PC-9 (cell line): ENCODE measurements at regions of chr16 and their contacts with region 1.

Region 1: GRCh38 chr16:78932355-78932943 is 668.1 kb downstream of the MAF start:
- DNase-seq: no peak
- H3K4me3 ChIP-seq: no peak overlapping the region
- H3K27ac ChIP-seq: no peak overlapping the region
- H3K4me1 ChIP-seq: no peaks in the 10 kb centered on the region
- H3K27me3 ChIP-seq: no peaks in the 10 kb centered on the region
- CTCF ChIP-seq: no peak

Region 2: GRCh38 chr16:79037521-79038373 is 105.3 kb after region 1 on chr16:
- CTCF ChIA-PET with region 1: interaction called, 4 read pairs
- POLR2A ChIA-PET with region 1: no interaction called
- intact Hi-C with region 1: loop called (anchors 10 kb)
- DNase-seq: no peak
- H3K4me3 ChIP-seq: no peak overlapping the region
- H3K27ac ChIP-seq: no peak overlapping the region
- H3K4me1 ChIP-seq: no peaks in the 10 kb centered on the region
- H3K27me3 ChIP-seq: no peaks in the 10 kb centered on the region
- CTCF ChIP-seq: no peak

Region 3: GRCh38 chr16:79510879-79511278 is 578.4 kb after region 1 on chr16:
- CTCF ChIA-PET with region 1: interaction called, 14 read pairs
- POLR2A ChIA-PET with region 1: no interaction called
- intact Hi-C with region 1: no loop called
- DNase-seq: no peak
- H3K4me3 ChIP-seq: no peak overlapping the region
- H3K27ac ChIP-seq: no peak overlapping the region
- H3K4me1 ChIP-seq: no peaks in the 10 kb centered on the region
- H3K27me3 ChIP-seq: peaks cover 79% of the 10 kb centered on the region
- CTCF ChIP-seq: no peak

Region 4: GRCh38 chr16:79845033-79845733 is 912.7 kb after region 1 on chr16:
- CTCF ChIA-PET with region 1: no interaction called
- POLR2A ChIA-PET with region 1: no interaction called
- intact Hi-C with region 1: no loop called
- DNase-seq: no peak
- H3K4me3 ChIP-seq: no peak overlapping the region
- H3K27ac ChIP-seq: no peak overlapping the region
- H3K4me1 ChIP-seq: no peaks in the 10 kb centered on the region
- H3K27me3 ChIP-seq: peaks cover 67% of the 10 kb centered on the region
- CTCF ChIP-seq: no peak